Activated CD4-positive, alpha-beta memory T cell treated with anti-CD3 and anti-CD28 coated beads, Interleukin-2, amount 10 ng/mL, durations not matched to agents 7 days and 5 days (primary cell): ENCODE measurements at regions of chr12 and their contacts with region 1.

Region 1: DNA sequence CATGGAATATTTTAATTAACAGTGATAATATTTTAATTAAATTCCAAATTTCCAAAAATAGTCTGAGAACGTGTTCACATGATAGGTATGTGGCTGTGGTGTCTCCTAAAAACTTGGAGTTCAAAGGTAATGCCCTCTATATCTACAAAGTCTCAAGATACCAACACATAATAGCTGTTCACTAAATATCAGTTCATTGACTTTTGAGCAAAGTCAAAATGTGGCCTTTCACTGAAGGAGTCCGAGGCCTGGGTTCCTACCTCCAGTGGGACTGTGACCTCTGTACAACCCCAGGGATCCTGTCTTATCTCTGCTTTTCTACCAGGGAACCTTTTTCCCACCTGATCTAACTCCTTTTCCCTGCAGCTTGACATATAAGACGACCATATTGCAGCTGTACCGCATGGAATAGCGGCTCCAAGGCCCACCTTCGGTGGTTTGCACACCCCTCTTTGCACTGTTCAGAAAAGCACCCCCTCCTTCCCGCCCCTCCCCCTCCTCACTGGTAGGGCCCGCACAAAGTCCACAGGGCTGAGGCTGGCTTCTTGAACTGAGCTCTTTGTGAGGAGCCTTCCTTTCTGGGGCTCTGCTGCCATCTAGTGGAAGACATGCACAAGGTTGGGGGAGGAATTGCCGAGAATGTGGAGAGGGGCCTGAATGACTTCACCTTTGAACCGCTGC is 3.1 kb downstream of the CCND2 start:
- DNase-seq: peak; percentile 89
- H3K4me3 Mint-ChIP-seq: peak overlapping the region; percentile 97
- H3K27ac Mint-ChIP-seq: peak overlapping the region; percentile 100
- H3K4me1 Mint-ChIP-seq: peaks cover 65% of the 10 kb centered on the region
- H3K27me3 Mint-ChIP-seq: no peaks in the 10 kb centered on the region

Region 2: GRCh38 chr12:3885277-3886094 is 391.2 kb before region 1 on chr12:
- CTCF ChIA-PET with region 1: interaction called, 102 read pairs
- POLR2A ChIA-PET with region 1: interaction called, 34 read pairs
- DNase-seq: peak; percentile 45
- H3K4me3 Mint-ChIP-seq: no peak overlapping the region
- H3K27ac Mint-ChIP-seq: no peak overlapping the region
- H3K4me1 Mint-ChIP-seq: peaks cover 10% of the 10 kb centered on the region
- H3K27me3 Mint-ChIP-seq: peaks cover 9% of the 10 kb centered on the region

Region 3: GRCh38 chr12:3988519-3989448 is 287.9 kb before region 1 on chr12:
- CTCF ChIA-PET with region 1: interaction called, 120 read pairs
- POLR2A ChIA-PET with region 1: interaction called, 7 read pairs
- DNase-seq: no peak
- H3K4me3 Mint-ChIP-seq: no peak overlapping the region
- H3K27ac Mint-ChIP-seq: peak overlapping the region; percentile 53
- H3K4me1 Mint-ChIP-seq: peaks cover 13% of the 10 kb centered on the region
- H3K27me3 Mint-ChIP-seq: peaks cover 10% of the 10 kb centered on the region

Region 4: GRCh38 chr12:4107436-4107878 is 169.2 kb before region 1 on chr12:
- CTCF ChIA-PET with region 1: interaction called, 162 read pairs
- POLR2A ChIA-PET with region 1: interaction called, 170 read pairs
- DNase-seq: peak; percentile 77
- H3K4me3 Mint-ChIP-seq: no peak overlapping the region
- H3K27ac Mint-ChIP-seq: peak overlapping the region; percentile 81
- H3K4me1 Mint-ChIP-seq: peaks cover 56% of the 10 kb centered on the region
- H3K27me3 Mint-ChIP-seq: peaks cover 2% of the 10 kb centered on the region

Region 5: DNA sequence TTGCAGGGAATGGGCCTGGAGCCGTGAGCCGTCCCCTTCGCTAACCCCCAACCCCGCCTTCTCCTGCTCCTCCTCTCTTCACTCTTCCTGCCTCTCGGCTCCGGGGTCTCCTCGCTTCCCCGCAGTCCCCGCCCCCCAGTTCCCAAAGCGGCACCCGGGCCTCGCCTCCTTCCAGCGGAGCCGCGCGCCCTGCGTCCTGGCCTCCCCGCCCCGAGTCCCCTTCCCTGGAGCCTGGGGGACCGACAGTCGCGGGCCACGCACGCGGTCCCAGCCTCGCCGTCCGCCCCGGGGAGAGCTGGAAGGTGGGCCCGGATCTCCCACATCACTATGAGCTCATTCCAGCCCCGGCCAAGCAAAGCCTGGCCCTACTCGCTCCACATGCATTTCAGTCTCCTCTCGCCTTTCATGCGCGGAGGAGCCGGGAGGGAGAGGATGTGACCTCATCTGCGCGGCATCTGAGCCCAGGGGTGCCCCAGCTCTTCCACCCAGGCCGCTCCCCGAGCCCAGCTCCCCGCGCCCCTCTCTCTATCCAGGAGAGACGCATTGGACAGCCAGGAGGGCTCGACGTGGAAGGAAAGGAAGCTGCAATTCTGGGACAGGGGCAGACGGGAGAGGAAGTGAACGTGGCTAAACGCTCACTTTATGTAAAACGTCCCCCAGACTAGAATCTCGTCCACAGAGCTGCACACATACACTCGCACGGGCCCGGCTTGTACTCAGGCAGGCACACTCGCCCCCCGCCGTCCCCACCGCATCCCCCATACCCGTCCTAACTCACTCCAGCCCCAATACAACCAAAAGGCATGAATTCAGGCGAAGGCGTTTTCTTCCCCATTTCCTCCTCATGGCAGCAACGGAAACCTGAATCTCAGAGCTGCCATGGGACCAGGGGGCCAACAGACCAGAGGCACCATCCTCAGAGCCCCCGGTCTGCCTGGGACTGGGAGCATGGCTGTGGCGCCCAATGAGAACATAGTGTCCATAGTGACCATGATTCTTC is 111.8 kb before region 1 on chr12:
- CTCF ChIA-PET with region 1: interaction called, 11 read pairs
- POLR2A ChIA-PET with region 1: interaction called, 23 read pairs
- DNase-seq: peak; percentile 71
- H3K4me3 Mint-ChIP-seq: peak overlapping the region; percentile 72
- H3K27ac Mint-ChIP-seq: peak overlapping the region; percentile 84
- H3K4me1 Mint-ChIP-seq: peaks cover 64% of the 10 kb centered on the region
- H3K27me3 Mint-ChIP-seq: no peaks in the 10 kb centered on the region

Region 6: GRCh38 chr12:4287325-4288211 is 10.9 kb after region 1 on chr12:
- CTCF ChIA-PET with region 1: interaction called, 10 read pairs
- POLR2A ChIA-PET with region 1: interaction called, 43 read pairs
- DNase-seq: no peak
- H3K4me3 Mint-ChIP-seq: no peak overlapping the region
- H3K27ac Mint-ChIP-seq: peak overlapping the region; percentile 56
- H3K4me1 Mint-ChIP-seq: peaks cover 96% of the 10 kb centered on the region
- H3K27me3 Mint-ChIP-seq: no peaks in the 10 kb centered on the region